HAP-1 (cell line): ENCODE measurements at regions of chr10 and their contacts with region 1.

Region 1: GRCh38 chr10:14507176-14507575 is 176.5 kb upstream of the FRMD4A start:
- DNase-seq: no peak
- H3K4me3 ChIP-seq: no peak overlapping the region
- H3K4me1 ChIP-seq: peaks cover 5% of the 10 kb centered on the region
- H3K27me3 ChIP-seq: no peaks in the 10 kb centered on the region

Region 2: DNA sequence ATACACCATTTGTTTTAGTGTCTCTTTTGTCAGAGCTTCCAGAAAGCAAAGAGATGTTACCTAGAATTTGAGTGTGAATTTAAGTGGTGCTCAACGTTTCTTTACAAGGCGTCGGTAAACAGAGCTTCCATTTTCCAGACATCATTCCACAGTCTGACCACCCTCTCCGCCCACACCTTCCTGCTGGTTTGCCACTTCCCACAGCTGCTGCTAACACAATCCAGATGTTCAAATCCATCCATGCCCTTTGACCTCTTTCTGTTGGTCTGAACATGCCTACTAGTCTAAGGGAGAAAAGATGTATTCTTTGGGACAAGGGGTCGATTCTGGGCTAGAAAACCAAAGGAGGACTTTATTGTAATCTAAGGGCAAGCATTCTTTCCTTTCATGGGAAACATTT is 181.4 kb after region 1 on chr10:
- in situ Hi-C with region 1: no loop called
- DNase-seq: no peak
- H3K4me3 ChIP-seq: no peak overlapping the region
- H3K4me1 ChIP-seq: no peaks in the 10 kb centered on the region
- H3K27me3 ChIP-seq: no peaks in the 10 kb centered on the region

Region 3: DNA sequence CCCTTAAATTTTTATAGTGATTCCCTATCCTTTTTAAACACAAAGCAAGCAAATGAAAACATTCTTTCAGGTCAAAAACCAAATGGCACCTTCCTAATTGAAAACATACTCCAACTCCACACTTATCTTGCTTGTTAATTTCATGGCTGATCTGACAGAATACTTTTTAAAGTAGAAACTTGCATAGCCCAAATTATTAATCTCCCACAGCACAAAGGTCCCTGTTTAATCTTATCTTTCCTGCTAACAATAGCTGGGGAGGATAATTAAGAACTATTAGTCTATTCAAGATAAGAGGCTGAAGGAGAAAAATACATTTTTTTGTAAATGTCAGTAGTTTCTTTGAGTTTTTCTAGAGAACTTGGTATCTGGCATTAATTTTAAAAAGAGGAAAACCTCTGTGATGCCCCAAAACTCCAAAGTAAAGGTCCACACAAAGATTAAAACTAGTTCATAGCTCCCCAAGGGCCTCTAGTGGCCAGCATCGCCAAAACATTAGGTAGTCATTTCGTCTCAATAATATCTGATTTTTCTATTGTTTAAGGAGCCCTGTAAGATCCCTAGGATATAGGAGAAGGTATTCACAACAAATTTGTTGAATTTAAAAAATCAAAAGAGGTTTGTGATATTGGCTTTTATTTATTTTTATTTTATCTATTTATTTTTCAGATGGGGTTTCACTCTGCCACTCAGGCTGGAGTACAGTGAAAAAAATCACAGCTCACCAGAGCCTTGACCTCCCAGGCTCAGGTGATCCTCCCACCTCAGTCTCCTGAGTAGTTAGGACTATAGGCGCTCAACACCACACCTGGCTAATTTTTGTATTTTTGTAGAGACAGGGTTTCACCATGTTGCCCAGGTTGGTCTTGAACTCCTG is 315.9 kb after region 1 on chr10:
- in situ Hi-C with region 1: loop called (anchors 10 kb)
- DNase-seq: peak; percentile 18 to 21
- H3K4me3 ChIP-seq: no peak overlapping the region
- H3K4me1 ChIP-seq: no peaks in the 10 kb centered on the region
- H3K27me3 ChIP-seq: no peaks in the 10 kb centered on the region

Region 4: GRCh38 chr10:14918964-14919363 is 411.8 kb after region 1 on chr10:
- in situ Hi-C with region 1: no loop called
- DNase-seq: no peak
- H3K4me3 ChIP-seq: no peak overlapping the region
- H3K4me1 ChIP-seq: no peaks in the 10 kb centered on the region
- H3K27me3 ChIP-seq: no peaks in the 10 kb centered on the region

Region 5: GRCh38 chr10:15097011-15097812 is 590.0 kb after region 1 on chr10 and contains the start of gene RPP38:
- in situ Hi-C with region 1: loop called (anchors 25 kb)
- DNase-seq: peak; percentile 87 to 97
- H3K4me3 ChIP-seq: peak within 1 kb of the TSS; percentile 93
- H3K4me1 ChIP-seq: peaks cover 11% of the 10 kb centered on the region
- H3K27me3 ChIP-seq: no peaks in the 10 kb centered on the region

Region 6: GRCh38 chr10:15141136-15142054 is 634.2 kb after region 1 on chr10:
- in situ Hi-C with region 1: no loop called
- DNase-seq: no peak
- H3K4me3 ChIP-seq: no peak overlapping the region
- H3K4me1 ChIP-seq: no peaks in the 10 kb centered on the region
- H3K27me3 ChIP-seq: no peaks in the 10 kb centered on the region